AG04450 (cell line): ENCODE measurements at regions of chr12 and their contacts with region 1.

Region 1: GRCh38 chr12:103965590-103966504 is at the start of gene TDG:
- DNase-seq: peak; percentile 97
- H3K4me3 ChIP-seq: peak within 1 kb of the TSS; percentile 95
- H3K27ac ChIP-seq: peak within 1 kb of the TSS; percentile 88
- H3K27me3 ChIP-seq: no peaks in the 10 kb centered on the region
- CTCF ChIP-seq: peak; percentile 15; the same call in 1 of the 2 replicates
- polyA plus RNA-seq, gene TDG: 20.4 and 28.4 TPM in 2 replicates

Region 2: DNA sequence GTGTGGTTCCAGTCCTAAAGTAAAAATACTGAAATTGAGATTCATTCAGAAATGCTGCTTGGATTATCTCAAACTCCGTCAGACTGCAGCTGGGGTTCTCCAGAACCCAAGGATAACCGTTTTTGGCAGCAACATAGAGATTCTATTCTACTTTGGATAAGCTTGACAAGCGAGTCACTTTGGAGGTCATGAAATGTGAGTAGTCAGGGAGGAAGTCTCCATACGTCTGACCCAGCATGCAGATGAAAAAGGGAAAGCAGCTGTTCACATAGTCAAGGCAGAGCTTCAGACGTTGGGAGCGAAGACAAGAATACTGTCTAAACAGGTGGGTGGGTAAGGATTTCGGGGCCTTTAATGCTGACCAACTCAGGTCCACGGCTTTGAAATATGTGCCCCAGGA is 50.5 kb before region 1 on chr12:
- CTCF ChIA-PET with region 1: no interaction called
- POLR2A ChIA-PET with region 1: no interaction called
- DNase-seq: peak; percentile 44
- H3K4me3 ChIP-seq: no peak overlapping the region
- H3K27ac ChIP-seq: peak overlapping the region; percentile 11
- H3K27me3 ChIP-seq: no peaks in the 10 kb centered on the region
- CTCF ChIP-seq: no peak

Region 3: DNA sequence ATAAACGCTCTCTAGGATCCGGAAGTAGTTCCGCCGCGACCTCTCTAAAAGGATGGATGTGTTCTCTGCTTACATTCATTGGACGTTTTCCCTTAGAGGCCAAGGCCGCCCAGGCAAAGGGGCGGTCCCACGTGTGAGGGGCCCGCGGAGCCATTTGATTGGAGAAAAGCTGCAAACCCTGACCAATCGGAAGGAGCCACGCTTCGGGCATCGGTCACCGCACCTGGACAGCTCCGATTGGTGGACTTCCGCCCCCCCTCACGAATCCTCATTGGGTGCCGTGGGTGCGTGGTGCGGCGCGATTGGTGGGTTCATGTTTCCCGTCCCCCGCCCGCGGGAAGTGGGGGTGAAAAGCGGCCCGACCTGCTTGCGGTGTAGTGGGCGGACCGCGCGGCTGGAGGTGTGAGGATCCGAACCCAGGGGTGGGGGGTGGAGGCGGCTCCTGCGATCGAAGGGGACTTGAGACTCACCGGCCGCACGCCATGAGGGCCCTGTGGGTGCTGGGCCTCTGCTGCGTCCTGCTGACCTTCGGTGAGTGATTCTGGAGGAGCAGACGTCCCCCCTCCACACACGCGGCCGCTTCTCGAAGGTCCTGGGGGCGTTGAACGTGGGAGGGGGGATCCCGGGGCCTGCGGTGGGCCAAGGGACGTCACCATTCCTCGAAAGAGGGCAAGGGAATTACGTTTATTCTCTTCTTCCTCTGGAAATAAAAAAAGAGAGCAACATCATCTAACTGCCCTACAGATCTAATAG is 35.6 kb before region 1 on chr12 and contains the start of gene HSP90B1:
- CTCF ChIA-PET with region 1: no interaction called
- POLR2A ChIA-PET with region 1: interaction called, 18 read pairs
- DNase-seq: peak; percentile 100
- H3K4me3 ChIP-seq: peak within 1 kb of the TSS; percentile 89
- H3K27ac ChIP-seq: peak within 1 kb of the TSS; percentile 97
- H3K27me3 ChIP-seq: no peaks in the 10 kb centered on the region
- CTCF ChIP-seq: no peak
- polyA plus RNA-seq, gene HSP90B1: 600 and 848 TPM in 2 replicates

Region 4: GRCh38 chr12:104064031-104064822 is 98.4 kb after region 1 on chr12 and contains the start of gene HCFC2:
- CTCF ChIA-PET with region 1: no interaction called
- POLR2A ChIA-PET with region 1: interaction called, 18 read pairs
- DNase-seq: peak; percentile 70
- H3K4me3 ChIP-seq: peak within 1 kb of the TSS; percentile 93
- H3K27ac ChIP-seq: peak within 1 kb of the TSS; percentile 91
- H3K27me3 ChIP-seq: no peaks in the 10 kb centered on the region
- CTCF ChIP-seq: no peak
- polyA plus RNA-seq, gene HCFC2: 20.8 and 31.4 TPM in 2 replicates